ENCODE measurements at regions of chr17 and their contacts with region 1.

Region 1: DNA sequence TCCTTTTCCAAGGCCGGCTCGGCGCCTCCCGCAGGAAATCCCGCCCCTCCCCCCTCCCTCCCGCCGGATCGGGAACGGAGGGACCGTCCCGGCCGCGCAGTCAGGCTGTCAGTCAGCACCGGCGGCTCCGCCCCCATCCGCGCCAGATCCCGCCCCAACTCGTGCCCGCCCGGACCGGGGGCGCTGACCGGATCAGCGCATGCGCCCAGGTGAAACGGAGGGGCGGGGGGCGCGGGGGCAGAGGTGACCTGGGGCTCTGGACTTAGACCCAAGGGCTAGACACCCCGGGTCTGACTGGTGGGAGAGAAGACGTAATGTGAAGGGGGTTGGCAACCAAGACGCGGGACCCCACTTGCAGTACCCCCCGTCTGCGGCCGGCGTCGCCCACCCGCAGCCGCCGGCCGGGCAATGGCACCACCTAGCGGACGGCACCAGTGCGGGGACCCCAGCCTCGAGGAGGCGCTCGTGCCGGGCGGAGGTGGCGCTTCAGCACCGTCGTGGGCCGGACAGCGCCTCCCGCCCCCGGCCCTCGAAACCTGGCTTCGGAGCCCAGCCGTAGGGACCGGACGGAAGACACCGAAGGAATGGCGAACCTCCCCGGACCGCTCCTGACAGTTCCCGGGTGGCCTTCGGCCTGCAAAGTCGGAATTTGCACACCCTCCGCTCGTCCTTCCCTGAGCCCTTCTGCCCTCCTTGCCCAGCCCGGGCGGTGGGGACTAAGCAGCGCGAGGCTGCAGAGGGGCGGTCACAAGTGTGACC is at the start of gene CASKIN2:
- H3K4me3 Mint-ChIP-seq: peak within 1 kb of the TSS; percentile 83
- H3K27ac Mint-ChIP-seq: peak within 1 kb of the TSS; percentile 59
- H3K4me1 Mint-ChIP-seq: peaks cover 26% of the 10 kb centered on the region
- H3K27me3 Mint-ChIP-seq: peaks cover 40% of the 10 kb centered on the region

Region 2: DNA sequence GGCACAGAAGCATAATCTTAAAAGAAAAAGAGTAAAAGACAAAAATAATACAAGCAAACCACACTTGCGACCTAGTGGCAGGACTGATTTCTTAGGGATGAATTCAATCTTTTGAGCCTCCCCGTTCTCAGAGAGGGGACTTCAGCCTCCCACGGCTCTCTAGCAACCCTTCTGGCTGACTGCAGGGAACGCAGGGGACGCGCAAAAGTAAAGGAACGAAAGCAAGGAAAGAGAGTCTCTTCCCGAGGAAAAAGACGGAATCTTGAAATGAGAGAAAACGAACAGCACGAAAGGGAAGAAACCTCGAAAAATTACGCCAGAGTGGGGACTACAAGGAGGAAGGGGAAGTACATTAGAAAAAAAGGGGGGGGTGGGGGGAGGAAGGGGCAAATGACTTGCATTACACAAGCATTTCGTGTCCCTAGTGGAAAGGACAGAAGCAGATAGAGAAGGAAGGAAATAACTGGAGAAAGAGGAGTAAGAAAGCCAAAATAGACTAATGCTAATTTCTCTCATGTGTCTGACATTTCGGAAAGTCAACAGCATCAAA is 111.4 kb before region 1 on chr17:
- intact Hi-C with region 1: no loop called
- H3K4me3 Mint-ChIP-seq: peak overlapping the region; percentile 97
- H3K27ac Mint-ChIP-seq: peak overlapping the region; percentile 97
- H3K4me1 Mint-ChIP-seq: peaks cover 41% of the 10 kb centered on the region
- H3K27me3 Mint-ChIP-seq: no peaks in the 10 kb centered on the region

Region 3: DNA sequence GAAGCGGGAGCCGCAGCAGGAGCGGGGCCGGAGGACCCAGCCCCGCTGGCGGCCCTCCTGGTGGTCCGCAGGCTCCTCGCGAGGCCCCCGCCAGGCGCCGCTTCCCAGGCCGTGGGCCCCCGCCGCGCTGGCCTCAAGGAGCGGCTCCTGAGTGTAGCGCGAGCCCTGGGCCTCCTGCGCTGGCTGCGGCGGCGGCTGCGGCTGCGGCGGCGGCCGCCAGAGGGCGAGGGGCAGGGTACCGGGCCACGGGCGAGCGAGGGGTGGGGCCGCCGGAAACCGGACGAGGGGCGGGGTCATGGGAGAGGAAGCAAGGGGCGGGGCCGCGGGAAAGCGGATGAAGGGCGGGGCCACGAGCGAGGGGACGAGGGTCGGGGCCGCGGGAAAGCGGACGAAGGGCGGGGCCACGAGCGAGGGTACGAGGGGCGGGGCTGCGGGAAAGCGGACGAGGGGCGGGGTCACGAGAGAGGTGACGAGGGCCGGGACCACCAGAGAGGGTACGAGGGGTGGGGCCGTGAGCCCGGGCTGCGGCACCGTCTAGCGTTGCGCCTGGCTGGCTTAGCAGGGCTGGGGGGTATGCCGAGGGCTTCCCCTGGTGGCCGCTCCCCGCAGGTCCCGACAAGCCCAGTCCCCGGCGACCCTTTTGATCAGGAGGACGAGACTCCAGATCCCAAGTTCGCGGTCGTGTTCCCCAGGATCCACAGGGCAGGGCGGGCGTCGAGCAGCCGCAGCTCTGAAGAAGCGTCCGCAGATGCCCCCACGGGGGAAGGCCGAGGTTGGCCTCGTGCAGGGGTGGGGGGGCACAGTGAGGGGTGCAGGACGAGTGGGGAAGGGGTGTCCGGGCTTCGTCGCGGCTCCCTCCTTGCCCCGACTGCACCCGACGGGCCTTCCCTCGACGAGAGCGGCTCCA is 73.6 kb after region 1 on chr17:
- intact Hi-C with region 1: loop called (anchors 2 kb)
- H3K4me3 Mint-ChIP-seq: peak overlapping the region; percentile 78
- H3K27ac Mint-ChIP-seq: peak overlapping the region; percentile 93
- H3K4me1 Mint-ChIP-seq: peaks cover 29% of the 10 kb centered on the region
- H3K27me3 Mint-ChIP-seq: no peaks in the 10 kb centered on the region